H1 (cell line): ENCODE measurements at regions of chr1 and their contacts with region 1.

Region 1: GRCh38 chr1:211698161-211699026 is 23.0 kb upstream of the NEK2 start:
- DNase-seq: peak in 1 of 2 experiments; percentile 99
- H3K4me3 ChIP-seq: peak overlapping the region; percentile 28 to 72 (median 61); a peak in 7 of 8 replicates
- H3K27ac ChIP-seq: no peak overlapping the region
- H3K4me1 ChIP-seq: no peaks in the 10 kb centered on the region; a peak in 1 of 7 replicates
- H3K27me3 ChIP-seq: peaks cover 1 to 13% (median 5%) of the 10 kb centered on the region in 4 experiments; a peak in 6 of 7 replicates
- CTCF ChIP-seq: peak; percentile 98 to 99 (median 99)
- EP300 ChIP-seq: no peak
- POLR2A ChIP-seq: no peak
- RAD21 ChIP-seq: peak; percentile 93 to 95

Region 2: DNA sequence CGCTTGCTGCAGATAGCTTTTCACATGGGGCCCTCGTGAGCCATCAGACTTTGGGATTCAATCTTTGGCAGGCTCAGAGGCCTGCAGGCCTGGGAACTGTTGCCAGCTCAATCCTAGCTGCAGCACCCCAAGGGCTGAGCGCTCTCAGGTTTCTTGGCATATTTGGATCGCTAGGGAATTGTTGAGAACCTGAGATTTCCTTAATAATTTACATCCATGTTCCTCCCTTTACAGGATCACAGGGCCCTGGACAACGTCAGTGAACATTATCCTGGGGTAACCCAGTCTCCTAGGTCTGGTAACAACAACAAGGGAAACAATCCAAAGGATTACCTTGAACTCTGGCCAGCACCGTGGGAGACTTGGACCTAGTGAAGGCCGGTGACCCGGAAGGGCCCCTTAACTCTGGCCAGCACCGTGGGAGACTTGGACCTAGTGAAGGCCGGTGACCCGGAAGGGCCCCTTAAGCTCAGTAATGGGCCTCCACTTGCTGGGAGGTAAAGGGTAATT is 26.3 kb after region 1 on chr1:
- CTCF ChIA-PET with region 1: interaction called, 43 read pairs
- POLR2A ChIA-PET with region 1: no interaction called
- DNase-seq: no peak
- H3K4me3 ChIP-seq: no peak overlapping the region
- H3K27ac ChIP-seq: no peak overlapping the region
- H3K4me1 ChIP-seq: no peaks in the 10 kb centered on the region
- H3K27me3 ChIP-seq: no peaks in the 10 kb centered on the region
- CTCF ChIP-seq: no peak
- EP300 ChIP-seq: no peak
- POLR2A ChIP-seq: no peak
- RAD21 ChIP-seq: no peak

Region 3: GRCh38 chr1:211829343-211830054 is 131.1 kb after region 1 on chr1:
- CTCF ChIA-PET with region 1: interaction called, 15 read pairs
- POLR2A ChIA-PET with region 1: interaction called, 3 read pairs
- DNase-seq: peak in 1 of 2 experiments; percentile 58
- H3K4me3 ChIP-seq: peak overlapping the region; percentile 47 to 74 (median 57)
- H3K27ac ChIP-seq: no peak overlapping the region
- H3K4me1 ChIP-seq: peaks cover 0 to 7% (median 3%) of the 10 kb centered on the region in 4 experiments; a peak in 5 of 7 replicates
- H3K27me3 ChIP-seq: peaks cover 0 to 12% (median 6%) of the 10 kb centered on the region in 4 experiments; a peak in 5 of 7 replicates
- CTCF ChIP-seq: peak; percentile 18 to 38 (median 26); a peak in 3 of 4 replicates
- EP300 ChIP-seq: no peak
- POLR2A ChIP-seq: no peak
- RAD21 ChIP-seq: no peak; a peak in 1 of 4 replicates

Region 4: DNA sequence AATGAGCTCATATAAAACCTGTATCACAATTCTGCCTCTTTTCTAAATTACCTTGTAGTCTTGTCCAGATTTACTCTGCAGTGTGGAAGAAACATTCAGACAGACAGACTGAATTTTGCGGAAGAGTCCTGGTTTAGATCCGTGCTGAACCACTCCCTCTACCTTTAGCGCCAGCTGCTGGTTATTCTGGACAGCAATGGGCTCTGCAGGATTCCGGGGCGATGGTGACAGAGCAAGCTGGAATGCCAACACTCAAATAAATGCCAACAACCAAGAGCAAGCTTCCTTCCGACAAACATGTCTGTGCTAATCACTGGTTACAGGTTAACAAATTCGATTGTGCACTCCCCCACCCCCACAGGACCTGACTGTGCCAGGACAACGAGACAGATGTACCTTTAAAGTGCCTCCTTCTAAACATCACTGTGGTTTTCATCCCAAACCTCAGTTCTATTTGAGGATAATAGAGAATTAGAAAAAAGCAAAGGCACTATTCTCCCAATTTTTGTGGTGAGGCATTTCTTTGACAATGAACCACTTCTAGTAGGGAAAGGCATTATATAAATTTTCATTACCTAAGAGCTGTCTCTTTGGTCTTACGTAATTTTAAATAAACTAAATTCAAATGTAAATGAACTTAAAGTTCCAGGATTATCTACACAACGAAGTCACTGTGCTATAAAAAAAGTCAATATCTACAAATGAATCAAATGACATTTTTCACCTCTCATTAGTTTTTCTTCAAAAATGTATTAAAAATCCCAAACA is 246.5 kb after region 1 on chr1:
- CTCF ChIA-PET with region 1: interaction called, 23 read pairs
- POLR2A ChIA-PET with region 1: no interaction called
- DNase-seq: peak in 1 of 2 experiments; percentile 41
- H3K4me3 ChIP-seq: no peak overlapping the region
- H3K27ac ChIP-seq: no peak overlapping the region
- H3K4me1 ChIP-seq: peaks cover 0 to 5% (median 3%) of the 10 kb centered on the region in 4 experiments; a peak in 2 of 7 replicates
- H3K27me3 ChIP-seq: peaks cover 0 to 3% (median 1%) of the 10 kb centered on the region in 4 experiments; a peak in 3 of 7 replicates
- CTCF ChIP-seq: peak; percentile 64 to 81 (median 69)
- EP300 ChIP-seq: no peak
- POLR2A ChIP-seq: no peak
- RAD21 ChIP-seq: peak; percentile 74 to 81

Region 5: DNA sequence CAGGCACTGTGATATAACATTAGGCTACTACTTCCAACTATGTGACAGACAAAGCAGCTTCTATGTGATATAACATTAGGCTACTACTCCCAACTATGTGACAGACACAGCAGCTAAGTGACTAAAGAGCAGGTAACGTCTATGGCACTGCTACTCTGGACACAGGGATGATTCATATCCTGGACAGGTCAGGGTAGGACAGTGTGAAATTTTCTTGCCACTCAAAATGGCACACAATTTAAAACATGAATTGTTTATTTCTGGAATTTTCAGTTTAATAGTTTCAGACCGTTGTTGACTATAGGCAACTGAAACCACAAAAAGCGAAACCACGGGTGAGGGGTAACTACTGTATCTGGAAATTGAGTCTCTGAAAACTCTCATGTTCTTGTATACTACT is 342.2 kb after region 1 on chr1:
- CTCF ChIA-PET with region 1: interaction called, 20 read pairs
- POLR2A ChIA-PET with region 1: interaction called, 3 read pairs
- DNase-seq: no peak
- H3K4me3 ChIP-seq: no peak overlapping the region
- H3K27ac ChIP-seq: no peak overlapping the region
- H3K4me1 ChIP-seq: peaks cover 0 to 3% (median 0%) of the 10 kb centered on the region in 4 experiments; a peak in 1 of 7 replicates
- H3K27me3 ChIP-seq: no peaks in the 10 kb centered on the region
- CTCF ChIP-seq: no peak
- EP300 ChIP-seq: no peak
- POLR2A ChIP-seq: no peak
- RAD21 ChIP-seq: no peak